ENCODE measurements at regions of chr3 and their contacts with region 1.

Region 1: GRCh38 chr3:183188895-183189462 is 26.4 kb upstream of the LAMP3 start:
- DNase-seq: no peak
- ATAC-seq: peak; percentile 88
- H3K4me3 ChIP-seq: no peak overlapping the region
- H3K27ac ChIP-seq: no peak overlapping the region
- H3K4me1 ChIP-seq: peaks cover 2% of the 10 kb centered on the region; the same call in 1 of the 2 replicates
- H3K27me3 ChIP-seq: no peaks in the 10 kb centered on the region
- CTCF ChIP-seq: peak; percentile 49 to 60 (median 57); a peak in 5 of 6 replicates
- EP300 ChIP-seq: no peak
- POLR2A ChIP-seq: no peak
- RAD21 ChIP-seq: peak; percentile 61

Region 2: DNA sequence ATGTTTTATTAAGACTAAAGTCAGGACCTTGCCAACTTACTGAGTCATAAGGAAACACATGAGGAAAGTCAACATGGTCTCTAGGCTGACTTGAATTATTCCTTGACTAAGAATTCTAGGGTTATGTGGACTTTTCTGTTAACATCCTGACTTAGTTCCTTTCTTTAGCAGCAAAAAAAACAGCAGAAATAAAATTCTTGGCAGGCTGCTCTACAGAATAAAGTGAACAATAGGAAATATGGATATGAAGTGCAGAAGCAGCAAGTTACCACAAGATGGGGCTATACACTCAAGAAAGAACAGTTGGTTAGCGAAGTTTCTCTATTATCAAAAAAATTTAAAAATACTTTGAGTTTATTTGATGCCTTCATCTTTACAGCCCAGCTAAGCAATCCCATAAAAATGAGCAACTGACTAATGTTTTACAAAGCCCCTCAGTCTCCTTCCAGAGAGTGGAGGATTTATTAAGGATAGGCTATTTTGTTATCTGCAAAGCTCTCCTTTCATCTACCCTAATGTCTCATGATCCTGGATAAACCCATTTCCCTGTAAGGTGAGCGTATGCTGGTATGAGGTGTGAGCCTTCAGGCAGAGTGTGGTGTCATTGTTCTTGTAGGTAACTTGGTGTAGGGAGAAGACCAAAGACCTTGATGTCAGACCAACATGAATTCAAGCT is 66.6 kb before region 1 on chr3:
- CTCF ChIA-PET with region 1: interaction called, 140 read pairs
- POLR2A ChIA-PET with region 1: no interaction called
- RAD21 ChIA-PET with region 1: interaction called, 89 read pairs
- SMC1A ChIA-PET with region 1: interaction called, 71 read pairs
- in situ Hi-C with region 1: no loop called
- intact Hi-C with region 1: loop called (anchors 1 kb)
- DNase-seq: no peak
- ATAC-seq: peak; percentile 68
- H3K4me3 ChIP-seq: no peak overlapping the region
- H3K27ac ChIP-seq: no peak overlapping the region
- H3K4me1 ChIP-seq: no peaks in the 10 kb centered on the region
- H3K27me3 ChIP-seq: no peaks in the 10 kb centered on the region
- CTCF ChIP-seq: peak; percentile 61 to 75 (median 73)
- EP300 ChIP-seq: no peak
- POLR2A ChIP-seq: no peak
- RAD21 ChIP-seq: peak; percentile 93

Region 3: GRCh38 chr3:183158551-183159006 is 30.4 kb before region 1 on chr3:
- CTCF ChIA-PET with region 1: interaction called, 82 read pairs
- POLR2A ChIA-PET with region 1: interaction called, 3 read pairs
- RAD21 ChIA-PET with region 1: interaction called, 26 read pairs
- SMC1A ChIA-PET with region 1: interaction called, 26 read pairs
- in situ Hi-C with region 1: no loop called
- intact Hi-C with region 1: loop called (anchors 2 kb)
- DNase-seq: peak; percentile 97
- ATAC-seq: peak; percentile 71
- H3K4me3 ChIP-seq: peak overlapping the region; percentile 84
- H3K27ac ChIP-seq: peak overlapping the region; percentile 91
- H3K4me1 ChIP-seq: peaks cover 43% of the 10 kb centered on the region
- H3K27me3 ChIP-seq: no peaks in the 10 kb centered on the region
- CTCF ChIP-seq: no peak
- EP300 ChIP-seq: peak; percentile 90 to 91
- POLR2A ChIP-seq: no peak; the same call in 1 of the 2 replicates
- RAD21 ChIP-seq: no peak

Region 4: DNA sequence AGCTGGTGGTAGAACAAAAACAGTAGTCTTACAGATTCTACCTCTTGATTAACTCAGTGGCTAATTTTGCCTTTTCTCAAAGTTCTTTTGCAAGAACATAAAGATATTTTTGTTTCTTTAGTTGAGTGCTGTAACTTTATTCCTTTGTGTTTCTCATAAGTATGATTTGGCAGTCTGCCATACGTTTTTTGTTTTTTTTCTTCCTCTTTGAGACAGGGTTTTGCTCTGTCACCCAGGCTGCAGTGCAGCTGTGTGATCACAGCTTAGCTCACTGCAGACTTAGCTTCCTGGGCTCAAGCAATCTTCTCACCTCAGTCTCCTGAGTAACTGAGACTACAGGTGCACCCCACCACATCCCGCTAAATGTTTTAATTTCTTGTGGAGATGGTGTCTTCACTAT is 86.4 kb after region 1 on chr3:
- CTCF ChIA-PET with region 1: no interaction called
- POLR2A ChIA-PET with region 1: no interaction called
- RAD21 ChIA-PET with region 1: interaction called, 3 read pairs
- SMC1A ChIA-PET with region 1: interaction called, 15 read pairs
- in situ Hi-C with region 1: no loop called
- intact Hi-C with region 1: no loop called
- DNase-seq: no peak
- ATAC-seq: no peak
- H3K4me3 ChIP-seq: no peak overlapping the region
- H3K27ac ChIP-seq: no peak overlapping the region
- H3K4me1 ChIP-seq: no peaks in the 10 kb centered on the region
- H3K27me3 ChIP-seq: no peaks in the 10 kb centered on the region
- CTCF ChIP-seq: no peak
- EP300 ChIP-seq: no peak
- POLR2A ChIP-seq: no peak
- RAD21 ChIP-seq: no peak

Region 5: DNA sequence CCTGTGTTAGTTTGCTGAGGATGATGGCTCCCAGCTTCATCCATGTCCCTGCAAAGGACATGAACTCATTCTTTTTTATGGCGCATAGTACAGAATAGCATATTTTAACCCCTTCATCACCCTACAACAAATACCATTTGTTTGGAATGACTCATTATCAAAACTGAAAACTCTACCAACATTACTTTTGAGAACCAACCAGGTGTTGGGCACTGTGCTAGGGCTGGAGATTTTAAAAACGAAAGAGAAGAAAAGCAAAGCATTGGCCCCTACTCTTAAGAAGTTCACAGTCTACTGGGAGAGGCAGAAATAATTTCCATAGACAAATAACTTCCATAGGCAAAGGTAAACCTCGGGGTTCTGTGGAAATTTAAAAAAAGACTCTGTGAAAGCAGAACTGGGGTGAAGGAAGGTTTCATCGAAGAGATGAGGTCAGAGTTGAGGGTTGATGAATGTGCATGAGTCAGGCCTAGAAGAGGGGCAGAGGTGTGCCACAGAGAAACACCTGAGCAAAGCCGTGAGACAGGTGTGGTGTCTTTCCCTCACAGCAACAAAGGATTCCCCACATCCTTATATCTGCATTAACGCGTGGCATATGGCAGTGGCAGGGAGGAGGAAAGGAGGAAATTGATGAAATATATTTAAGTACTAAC is 188.5 kb after region 1 on chr3:
- CTCF ChIA-PET with region 1: interaction called, 400 read pairs
- POLR2A ChIA-PET with region 1: interaction called, 23 read pairs
- RAD21 ChIA-PET with region 1: interaction called, 256 read pairs
- SMC1A ChIA-PET with region 1: interaction called, 265 read pairs
- in situ Hi-C with region 1: loop called (anchors 5 kb)
- intact Hi-C with region 1: loop called (anchors 1 kb)
- DNase-seq: no peak
- ATAC-seq: peak; percentile 46
- H3K4me3 ChIP-seq: no peak overlapping the region
- H3K27ac ChIP-seq: no peak overlapping the region
- H3K4me1 ChIP-seq: peaks cover 11% of the 10 kb centered on the region; the same call in 1 of the 2 replicates
- H3K27me3 ChIP-seq: no peaks in the 10 kb centered on the region
- CTCF ChIP-seq: no peak
- EP300 ChIP-seq: no peak
- POLR2A ChIP-seq: no peak
- RAD21 ChIP-seq: no peak

Region 6: GRCh38 chr3:183884427-183885296 is 695.7 kb after region 1 on chr3 and contains the start of gene PARL:
- CTCF ChIA-PET with region 1: interaction called, 11 read pairs
- POLR2A ChIA-PET with region 1: interaction called, 3 read pairs
- RAD21 ChIA-PET with region 1: interaction called, 5 read pairs
- SMC1A ChIA-PET with region 1: interaction called, 6 read pairs
- in situ Hi-C with region 1: no loop called
- intact Hi-C with region 1: no loop called
- DNase-seq: peak; percentile 70
- ATAC-seq: peak; percentile 99
- H3K4me3 ChIP-seq: peak within 1 kb of the TSS; percentile 94
- H3K27ac ChIP-seq: peak within 1 kb of the TSS; percentile 76
- H3K4me1 ChIP-seq: peaks cover 4% of the 10 kb centered on the region
- H3K27me3 ChIP-seq: no peaks in the 10 kb centered on the region
- CTCF ChIP-seq: peak; percentile 98; a peak in 5 of 6 replicates
- EP300 ChIP-seq: no peak
- POLR2A ChIP-seq: peak; percentile 98
- RAD21 ChIP-seq: peak; percentile 67
- polyA plus RNA-seq, gene PARL: 49.7 to 83.0 TPM